ENCODE measurements at regions of chr2 and their contacts with region 1.

Region 1: DNA sequence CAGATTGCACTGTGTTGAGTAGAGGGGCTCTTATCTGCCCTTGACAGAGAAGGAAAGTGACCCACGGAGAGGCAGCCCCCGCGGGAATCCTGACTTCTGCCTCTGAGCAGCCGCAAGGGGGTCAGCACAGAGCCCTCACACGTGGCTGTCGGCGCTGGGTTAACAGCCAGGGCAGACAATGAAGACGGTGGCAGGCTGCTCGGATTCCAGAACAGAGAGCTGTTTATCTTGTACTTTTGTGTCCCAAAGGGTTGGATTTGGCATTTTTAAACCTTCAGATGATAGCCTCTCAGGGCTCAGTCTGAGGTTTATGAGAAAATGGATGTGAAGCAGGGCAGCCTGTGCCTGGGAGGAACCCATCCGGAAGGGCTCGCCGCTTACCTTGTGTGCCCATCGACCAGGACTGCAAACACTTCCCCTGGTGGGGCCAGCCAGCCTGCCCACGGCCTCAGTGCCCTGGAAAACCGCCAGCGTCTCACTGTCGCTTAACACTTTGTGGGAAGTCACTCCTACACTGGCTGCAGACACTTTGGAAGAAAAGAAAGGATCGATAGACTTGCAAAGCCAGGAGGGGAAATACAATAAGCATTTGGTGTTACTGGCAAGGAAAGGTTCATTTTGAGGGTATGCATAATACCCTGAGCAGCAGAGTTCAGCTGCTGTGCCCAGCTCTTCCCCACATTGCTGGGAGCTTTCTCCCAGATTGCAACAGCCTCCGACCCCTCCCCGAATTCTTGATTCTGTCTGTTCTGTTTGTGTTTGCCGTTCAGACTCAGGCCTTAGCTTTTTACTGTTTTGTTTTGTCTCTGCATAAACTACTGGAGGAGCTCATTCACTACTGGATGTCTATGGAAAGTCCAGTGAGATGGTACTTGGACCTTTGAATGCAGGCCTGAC is 325.3 kb upstream of the MYT1L start:
- DNase-seq: no peak
- ATAC-seq: peak in 1 of 8 donors; percentile 28
- H3K4me3 ChIP-seq: no peak overlapping the region
- H3K27ac ChIP-seq: no peak overlapping the region
- H3K4me1 ChIP-seq: peaks cover 0 to 13% (median 0%) of the 10 kb centered on the region in 9 donors
- H3K27me3 ChIP-seq: peaks cover 0 to 41% (median 5%) of the 10 kb centered on the region in 7 donors
- CTCF ChIP-seq: no peak

Region 2: GRCh38 chr2:2769481-2770431 is 113.4 kb after region 1 on chr2:
- intact Hi-C with region 1: loop called in 1 of 10 experiments (anchors 10 kb)
- DNase-seq: peak; percentile 70 to 80
- ATAC-seq: peak; percentile 90 to 98 (median 96)
- H3K4me3 ChIP-seq: peak overlapping the region in 3 of 10 donors; percentile 0 to 6 (median 2)
- H3K27ac ChIP-seq: peak overlapping the region; percentile 5 to 86 (median 78)
- H3K4me1 ChIP-seq: peaks cover 0 to 14% (median 5%) of the 10 kb centered on the region in 9 donors
- H3K27me3 ChIP-seq: no peaks in the 10 kb centered on the region
- CTCF ChIP-seq: peak in 6 of 9 donors; percentile 10 to 50 (median 42)

Measured in heart right ventricle (tissue), 16 donors.